GM18951 (cell line): ENCODE measurements at regions of chr16 and their contacts with region 1.

Region 1: DNA sequence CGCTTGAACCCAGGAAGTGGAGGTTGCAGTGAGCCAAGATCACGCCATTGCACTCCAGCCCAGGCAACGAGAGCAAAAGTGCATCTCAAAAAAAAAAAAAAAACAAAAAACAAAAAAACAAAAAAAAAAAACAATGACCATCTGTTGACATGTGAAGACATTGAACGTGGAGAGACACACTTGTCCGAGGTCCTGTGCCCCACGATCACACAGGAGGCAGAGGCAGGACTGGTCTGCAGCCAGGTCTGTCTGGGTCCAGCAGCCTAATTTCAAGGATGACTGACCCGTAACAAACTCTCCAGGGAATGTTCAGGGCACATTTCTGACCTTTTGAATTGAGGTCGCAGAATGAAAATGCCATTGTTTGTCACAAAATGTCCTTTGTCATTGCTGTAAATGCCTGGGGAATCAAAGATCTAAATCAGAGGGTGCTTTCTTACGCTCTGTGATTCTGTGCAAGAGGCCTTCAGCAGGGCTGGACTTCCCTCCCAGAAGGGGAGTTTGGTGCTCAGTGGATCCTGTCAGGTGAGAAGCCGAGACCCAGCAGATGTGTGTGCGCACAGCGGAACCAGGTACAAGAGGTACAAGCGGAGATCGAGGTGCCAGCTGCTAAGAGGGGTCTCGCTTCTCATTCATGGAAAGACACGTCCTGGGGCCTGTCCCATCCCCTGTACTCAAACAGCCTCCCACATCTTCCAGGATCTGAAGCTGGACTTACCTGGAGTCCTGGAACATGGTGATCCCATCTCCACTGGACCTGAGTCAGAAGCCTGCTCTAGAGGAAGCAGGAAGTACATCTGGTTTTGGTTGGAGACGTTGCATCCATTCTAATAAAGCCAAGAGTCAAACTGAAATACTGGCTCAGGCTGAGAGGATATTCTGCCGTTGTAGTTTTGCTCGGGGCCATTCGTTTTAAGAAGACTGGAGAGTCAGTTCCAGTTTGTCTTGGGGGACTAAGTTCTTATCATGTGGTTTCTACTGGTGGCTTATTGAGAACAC is 95.8 kb downstream of the IRF8 start:
- POLR2A ChIP-seq: no peak

Region 2: GRCh38 chr16:85821441-85822135 is 173.2 kb before region 1 on chr16:
- in situ Hi-C with region 1: loop called (anchors 5 kb)
- POLR2A ChIP-seq: no peak

Region 3: DNA sequence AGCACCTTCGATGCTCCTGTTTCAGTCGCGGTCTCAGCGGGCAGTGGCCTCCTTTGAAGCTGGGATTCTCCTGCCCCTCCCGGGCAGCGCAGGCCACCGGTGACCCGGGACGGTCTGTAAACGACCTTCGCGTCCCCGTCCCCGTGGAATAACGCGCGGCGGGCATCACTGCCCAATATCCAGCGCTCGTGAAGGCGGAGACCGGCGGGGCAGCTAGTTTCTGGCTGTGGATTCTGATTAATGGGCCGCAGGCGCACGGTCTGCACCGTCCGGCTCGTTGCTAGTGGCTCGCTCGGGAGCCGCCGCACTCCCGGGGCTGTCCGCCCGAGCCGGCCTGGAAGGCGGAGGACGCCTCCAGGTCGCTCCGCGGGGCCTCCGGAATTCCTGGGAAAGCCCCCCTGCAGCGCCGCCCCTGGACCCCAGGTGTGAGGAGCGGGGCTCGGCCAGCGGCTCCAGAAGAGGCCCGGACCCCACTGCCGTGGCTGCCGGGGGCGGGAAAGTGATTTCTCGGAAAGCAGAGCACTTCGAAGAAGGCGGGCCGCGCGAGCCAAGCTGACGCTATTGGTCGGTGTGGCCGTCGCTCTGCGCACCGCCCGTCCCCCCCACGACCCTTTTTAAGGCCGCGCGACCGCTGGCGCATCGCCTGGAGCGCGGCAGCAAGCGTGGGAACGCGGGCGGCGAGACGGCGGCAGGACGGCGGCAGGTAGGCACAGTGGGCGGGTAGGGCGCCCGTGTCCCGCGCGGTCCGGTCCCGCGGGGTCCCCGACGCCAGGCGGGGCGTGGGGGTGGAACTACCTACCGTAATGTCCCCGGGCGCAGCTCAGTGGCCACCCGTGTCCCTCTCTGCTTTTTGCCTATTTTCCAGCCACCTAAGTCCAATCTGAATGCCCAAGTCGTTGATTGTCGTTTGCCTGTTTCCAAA is 96.0 kb before region 1 on chr16 and contains the start of gene IRF8:
- in situ Hi-C with region 1: loop called (anchors 5 kb)
- POLR2A ChIP-seq: peak; percentile 99

Region 4: DNA sequence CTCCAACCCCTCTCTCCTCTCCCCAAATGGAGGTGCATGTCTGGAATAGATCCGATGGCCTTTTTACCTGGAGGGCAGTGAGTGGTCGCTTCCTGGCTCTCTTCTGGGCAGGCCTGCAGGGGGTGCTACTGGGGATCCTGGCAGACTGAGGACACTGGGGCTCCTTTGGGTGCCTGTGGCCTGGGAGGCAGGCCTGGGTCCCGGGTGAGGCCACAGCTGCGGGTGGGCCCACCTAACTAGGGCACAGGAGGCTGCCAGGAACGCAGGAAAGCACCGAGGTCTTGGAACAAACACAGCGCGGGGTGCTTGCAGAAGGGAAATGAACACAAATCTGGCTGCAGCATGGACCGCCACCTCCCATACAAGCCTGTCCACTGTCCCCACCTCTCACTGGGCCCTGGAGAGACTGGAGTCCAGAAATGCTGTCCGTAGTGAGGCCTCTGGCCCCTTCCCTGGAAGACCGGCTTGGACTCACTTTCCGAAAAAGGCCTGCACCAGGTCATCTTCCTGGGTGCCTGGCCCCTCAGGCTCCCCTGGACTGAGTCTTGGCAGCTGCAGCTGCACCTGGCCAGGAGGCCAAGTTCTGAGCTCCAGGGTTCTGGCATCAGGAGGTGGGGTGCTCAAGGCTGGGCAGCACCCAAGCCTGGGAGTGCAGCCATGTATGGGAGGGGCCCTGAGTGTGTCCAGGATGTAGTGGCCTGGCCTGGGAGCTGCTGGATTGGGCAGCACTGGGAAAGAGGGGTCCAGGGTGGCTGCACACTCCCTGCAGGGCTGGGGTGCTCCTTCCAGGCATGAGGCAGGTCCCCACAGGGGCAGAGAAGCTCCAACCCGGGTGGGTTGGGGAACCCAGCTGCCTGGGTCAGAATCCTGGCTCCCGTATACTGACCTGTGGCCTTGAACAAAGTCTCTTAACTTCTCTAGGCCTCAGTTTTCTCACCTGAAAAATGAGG is 99.3 kb after region 1 on chr16:
- in situ Hi-C with region 1: no loop called
- POLR2A ChIP-seq: no peak